Activated CD8-positive, alpha-beta memory T cell treated with anti-CD3 and anti-CD28 coated beads, Interleukin-2, amount 10 ng/mL, durations not matched to agents 7 days and 5 days (primary cell): ENCODE measurements at regions of chr5 and their contacts with region 1.

Region 1: GRCh38 chr5:133977161-133977787 is 8.8 kb upstream of the C5orf15 start:
- DNase-seq: no peak
- ATAC-seq: no peak
- H3K4me3 Mint-ChIP-seq: no peak overlapping the region
- H3K27ac Mint-ChIP-seq: peak overlapping the region; percentile 68
- H3K4me1 Mint-ChIP-seq: peaks cover 35% of the 10 kb centered on the region
- H3K27me3 Mint-ChIP-seq: no peaks in the 10 kb centered on the region

Region 2: DNA sequence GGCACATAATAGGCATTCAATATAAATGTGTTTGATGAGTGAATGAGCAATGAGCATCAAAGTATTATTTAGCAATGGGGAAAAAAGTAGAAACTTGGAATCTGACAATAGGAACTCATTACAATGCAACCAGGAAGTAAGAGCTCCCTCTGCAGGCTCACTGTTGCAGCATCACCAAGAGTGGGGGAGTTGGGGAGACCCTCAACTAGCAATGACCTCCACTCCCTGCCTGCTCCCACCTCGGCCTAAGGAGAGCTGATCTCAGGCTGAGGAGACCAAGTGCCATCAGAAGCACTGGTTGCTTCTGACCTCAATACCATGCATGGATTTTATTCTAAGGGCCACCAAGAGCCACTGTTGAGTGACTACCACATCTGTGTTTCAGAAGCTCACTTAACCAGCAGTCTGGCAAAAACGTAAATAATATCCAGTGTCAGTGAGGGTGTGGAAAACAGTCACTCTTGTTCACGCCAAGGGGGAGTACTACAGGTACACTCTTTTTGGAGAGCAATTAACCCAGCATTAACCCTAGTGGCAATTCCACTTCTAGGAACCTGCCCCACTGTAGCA is 19.5 kb after region 1 on chr5:
- CTCF ChIA-PET with region 1: interaction called, 27 read pairs
- DNase-seq: no peak
- ATAC-seq: no peak
- H3K4me3 Mint-ChIP-seq: no peak overlapping the region
- H3K27ac Mint-ChIP-seq: no peak overlapping the region
- H3K4me1 Mint-ChIP-seq: peaks cover 45% of the 10 kb centered on the region
- H3K27me3 Mint-ChIP-seq: no peaks in the 10 kb centered on the region

Region 3: GRCh38 chr5:134004592-134005375 is 27.5 kb after region 1 on chr5 and contains the start of gene VDAC1:
- CTCF ChIA-PET with region 1: interaction called, 11 read pairs
- DNase-seq: peak; percentile 89
- ATAC-seq: peak; percentile 83
- H3K4me3 Mint-ChIP-seq: peak within 1 kb of the TSS; percentile 90
- H3K27ac Mint-ChIP-seq: peak within 1 kb of the TSS; percentile 93
- H3K4me1 Mint-ChIP-seq: peaks cover 43% of the 10 kb centered on the region
- H3K27me3 Mint-ChIP-seq: no peaks in the 10 kb centered on the region
- total RNA-seq, gene VDAC1: 204 to 258 TPM